ENCODE measurements at regions of chr22 and their contacts with region 1.

Region 1: DNA sequence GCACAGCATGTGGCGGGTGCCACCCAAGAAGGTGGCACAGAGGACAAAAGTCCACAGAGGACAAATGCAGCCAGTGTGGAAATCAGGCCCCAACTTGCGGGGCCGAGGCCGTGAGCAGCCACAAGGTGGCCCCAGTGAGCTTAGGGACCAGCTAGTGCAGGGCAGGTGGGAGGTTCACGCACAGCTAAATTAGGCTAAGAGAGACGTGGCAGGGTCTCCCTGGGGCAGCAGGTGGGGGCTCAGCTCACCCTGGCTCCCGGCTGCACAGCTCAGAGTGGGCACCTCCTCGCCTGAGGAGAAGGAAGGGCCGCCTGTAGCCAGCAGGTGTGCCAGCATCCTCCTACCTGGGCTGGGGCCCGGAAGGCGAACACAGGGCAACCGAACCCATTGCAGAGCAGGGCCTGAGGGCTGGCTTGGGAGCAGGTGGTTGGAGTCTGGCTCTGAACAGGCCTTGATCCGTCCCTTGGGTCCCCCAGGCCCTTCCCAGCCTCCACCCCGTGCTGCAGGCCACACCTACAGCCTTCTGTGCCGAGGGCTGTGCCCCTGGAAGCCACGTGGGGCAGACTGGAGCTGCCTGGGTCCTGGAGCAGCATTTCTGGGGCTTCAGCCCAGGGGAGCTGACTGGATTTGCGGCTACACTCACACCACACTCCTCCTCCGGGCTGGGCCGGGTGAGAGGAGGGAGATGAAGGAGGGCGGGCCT is 26.1 kb upstream of the CELSR1 start:
- DNase-seq: peak; percentile 83 to 87
- ATAC-seq: peak; percentile 85 to 95 (median 91)
- H3K4me3 ChIP-seq: no peak overlapping the region
- H3K27ac ChIP-seq: peak overlapping the region in 9 of 10 donors; percentile 8 to 64 (median 47)
- H3K4me1 ChIP-seq: peaks cover 10 to 17% (median 13%) of the 10 kb centered on the region in 9 donors
- H3K27me3 ChIP-seq: no peaks in the 10 kb centered on the region
- CTCF ChIP-seq: peak; percentile 75 to 89 (median 80)

Region 2: GRCh38 chr22:46638601-46639431 is 75.3 kb after region 1 on chr22:
- intact Hi-C with region 1: no loop called
- DNase-seq: peak in 1 of 2 donors; percentile 17
- ATAC-seq: peak in 6 of 8 donors; percentile 5 to 48 (median 24)
- H3K4me3 ChIP-seq: no peak overlapping the region
- H3K27ac ChIP-seq: peak overlapping the region in 3 of 10 donors; percentile 10 to 33 (median 21)
- H3K4me1 ChIP-seq: peaks cover 18 to 66% (median 54%) of the 10 kb centered on the region in 9 donors
- H3K27me3 ChIP-seq: no peaks in the 10 kb centered on the region
- CTCF ChIP-seq: no peak

Region 3: DNA sequence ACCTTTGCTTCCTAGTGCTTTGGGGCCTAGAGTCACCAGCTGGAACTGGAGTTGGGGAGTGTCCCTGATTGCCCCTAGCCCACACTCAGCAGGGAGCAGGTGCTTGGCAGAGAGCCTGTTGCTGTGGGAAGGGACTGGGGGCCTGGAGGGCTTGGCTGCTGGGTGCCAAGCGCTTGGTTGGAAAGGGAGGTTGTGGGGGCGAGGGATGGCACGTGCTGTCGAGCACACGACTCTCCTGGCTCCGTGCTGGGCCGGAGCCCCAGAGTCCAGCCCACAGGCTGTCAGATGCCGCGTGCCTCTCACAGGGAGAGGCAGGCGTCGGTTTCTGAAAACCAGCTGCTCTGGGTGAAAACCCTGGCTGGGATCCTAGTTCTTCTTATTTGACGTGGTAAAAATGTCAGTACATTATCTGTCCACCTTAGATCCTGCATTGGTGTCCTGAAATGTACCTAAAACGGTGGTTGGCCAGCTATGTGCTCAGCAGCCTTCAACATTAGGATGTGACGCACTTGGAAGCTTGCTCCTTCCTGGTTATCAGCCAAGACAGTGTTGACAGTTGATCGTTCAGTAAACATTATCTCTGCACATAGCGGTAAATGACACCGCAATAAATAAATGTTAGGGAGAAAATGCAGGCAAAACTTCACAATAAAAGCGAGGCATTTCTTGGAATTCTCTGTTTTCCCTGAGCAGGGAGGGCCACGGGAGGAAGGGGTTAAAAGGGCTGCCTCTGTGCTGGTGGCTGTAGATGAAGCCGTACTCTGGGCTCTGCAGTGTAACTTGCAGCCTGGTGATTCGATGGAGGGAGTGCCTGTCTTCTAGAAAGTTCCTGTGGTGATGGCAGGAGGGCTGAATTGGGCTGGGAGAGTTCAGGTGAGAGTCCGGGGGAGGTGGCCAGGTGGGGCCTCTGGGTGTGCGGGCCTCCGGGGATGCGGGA is 85.9 kb after region 1 on chr22:
- intact Hi-C with region 1: loop called in 1 of 10 experiments (anchors 5 kb)
- DNase-seq: peak; percentile 58 to 72
- ATAC-seq: peak; percentile 48 to 79 (median 73)
- H3K4me3 ChIP-seq: no peak overlapping the region
- H3K27ac ChIP-seq: peak overlapping the region; percentile 75 to 94 (median 86)
- H3K4me1 ChIP-seq: peaks cover 55 to 96% (median 81%) of the 10 kb centered on the region in 9 donors
- H3K27me3 ChIP-seq: no peaks in the 10 kb centered on the region
- CTCF ChIP-seq: no peak

Region 4: GRCh38 chr22:46668116-46668515 is 104.6 kb after region 1 on chr22:
- intact Hi-C with region 1: loop called in 2 of 10 experiments (anchors 2 to 10 kb)
- DNase-seq: no peak
- ATAC-seq: no peak
- H3K4me3 ChIP-seq: no peak overlapping the region
- H3K27ac ChIP-seq: no peak overlapping the region
- H3K4me1 ChIP-seq: peaks cover 0 to 15% (median 6%) of the 10 kb centered on the region in 9 donors
- H3K27me3 ChIP-seq: no peaks in the 10 kb centered on the region
- CTCF ChIP-seq: no peak

Region 5: GRCh38 chr22:46726066-46726985 is 162.8 kb after region 1 on chr22:
- intact Hi-C with region 1: loop called in 2 of 10 experiments (anchors 5 to 10 kb)
- DNase-seq: no peak
- ATAC-seq: peak in 6 of 8 donors; percentile 2 to 63 (median 32)
- H3K4me3 ChIP-seq: no peak overlapping the region
- H3K27ac ChIP-seq: peak overlapping the region in 7 of 10 donors; percentile 11 to 52 (median 32)
- H3K4me1 ChIP-seq: peaks cover 24 to 80% (median 70%) of the 10 kb centered on the region in 9 donors
- H3K27me3 ChIP-seq: no peaks in the 10 kb centered on the region
- CTCF ChIP-seq: no peak

Region 6: DNA sequence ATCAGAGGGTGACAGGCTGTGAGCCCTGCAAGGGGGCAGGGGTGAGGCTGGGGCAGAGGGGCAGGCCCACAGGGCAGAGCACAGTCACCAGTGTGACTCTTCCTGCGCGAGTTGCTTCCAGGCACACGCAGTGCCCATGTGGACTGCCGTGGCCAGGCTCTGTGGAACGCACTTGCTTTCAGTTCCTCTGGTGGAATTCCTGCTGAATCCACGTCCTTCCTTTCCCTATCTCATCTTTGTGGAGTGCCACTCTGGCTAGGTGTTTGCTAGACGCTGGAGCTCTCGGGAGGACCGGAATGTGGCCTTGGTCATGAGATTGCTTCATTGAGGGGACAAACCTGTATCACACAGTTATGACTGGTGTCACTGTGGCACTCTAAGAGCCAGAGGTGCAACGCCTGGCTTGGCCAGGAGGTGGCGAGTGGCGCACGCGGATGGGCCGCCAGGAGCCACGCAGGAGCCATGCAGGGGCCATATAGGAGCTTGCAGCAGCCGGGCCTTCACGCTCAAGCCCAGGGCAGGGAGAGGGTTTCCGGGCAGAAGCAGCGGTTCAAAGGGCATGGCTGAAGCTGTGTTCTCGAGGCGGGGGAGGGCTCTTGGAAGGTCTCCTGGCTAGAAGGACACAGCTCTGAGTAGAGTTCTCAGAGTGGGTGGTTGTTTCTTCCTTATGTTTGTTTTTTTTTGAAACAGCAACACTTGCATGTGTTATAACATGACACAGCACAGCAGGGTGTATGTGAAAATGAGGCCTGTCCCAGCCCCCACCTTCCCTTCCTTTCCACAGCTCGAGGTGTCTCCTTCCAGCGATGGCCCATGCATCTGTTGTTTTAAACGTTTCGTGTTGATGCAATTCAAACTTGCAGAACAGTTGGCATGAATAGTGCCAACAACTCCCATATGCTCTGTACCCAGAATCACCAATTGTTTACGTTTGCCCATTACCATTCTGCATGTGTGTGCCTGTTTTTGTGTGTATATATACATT is 235.1 kb after region 1 on chr22:
- intact Hi-C with region 1: loop called in 2 of 10 experiments (anchors 2 to 5 kb)
- DNase-seq: peak; percentile 56 to 77
- ATAC-seq: peak; percentile 49 to 86 (median 84)
- H3K4me3 ChIP-seq: no peak overlapping the region
- H3K27ac ChIP-seq: no peak overlapping the region
- H3K4me1 ChIP-seq: peaks cover 0 to 20% (median 12%) of the 10 kb centered on the region in 9 donors
- H3K27me3 ChIP-seq: no peaks in the 10 kb centered on the region
- CTCF ChIP-seq: peak; percentile 75 to 94 (median 93)